ENCODE measurements at regions of chr15 and their contacts with region 1.

Region 1: DNA sequence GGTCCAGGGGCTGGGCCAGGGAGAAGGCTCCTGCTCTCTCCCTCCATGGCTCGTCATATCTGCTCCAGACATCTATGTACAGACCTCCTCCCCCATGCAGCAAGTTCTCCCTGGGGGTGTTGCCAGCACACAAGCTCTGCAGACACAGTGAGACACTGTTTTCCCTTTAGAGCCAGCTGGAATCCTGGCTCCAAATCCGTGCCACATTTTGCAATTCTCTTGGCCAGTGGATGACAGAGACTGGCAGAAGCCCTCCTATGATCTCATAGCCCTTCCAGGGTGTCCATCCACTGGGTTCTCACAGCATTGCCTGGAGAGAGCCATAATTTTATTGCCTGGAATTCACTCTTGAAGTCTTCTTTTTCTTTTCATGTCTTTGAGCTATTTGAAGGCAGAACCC is 203.9 kb downstream of the TLE3 start:
- DNase-seq: peak in 41 of 42 donors; percentile 9 to 89 (median 72)

Region 2: DNA sequence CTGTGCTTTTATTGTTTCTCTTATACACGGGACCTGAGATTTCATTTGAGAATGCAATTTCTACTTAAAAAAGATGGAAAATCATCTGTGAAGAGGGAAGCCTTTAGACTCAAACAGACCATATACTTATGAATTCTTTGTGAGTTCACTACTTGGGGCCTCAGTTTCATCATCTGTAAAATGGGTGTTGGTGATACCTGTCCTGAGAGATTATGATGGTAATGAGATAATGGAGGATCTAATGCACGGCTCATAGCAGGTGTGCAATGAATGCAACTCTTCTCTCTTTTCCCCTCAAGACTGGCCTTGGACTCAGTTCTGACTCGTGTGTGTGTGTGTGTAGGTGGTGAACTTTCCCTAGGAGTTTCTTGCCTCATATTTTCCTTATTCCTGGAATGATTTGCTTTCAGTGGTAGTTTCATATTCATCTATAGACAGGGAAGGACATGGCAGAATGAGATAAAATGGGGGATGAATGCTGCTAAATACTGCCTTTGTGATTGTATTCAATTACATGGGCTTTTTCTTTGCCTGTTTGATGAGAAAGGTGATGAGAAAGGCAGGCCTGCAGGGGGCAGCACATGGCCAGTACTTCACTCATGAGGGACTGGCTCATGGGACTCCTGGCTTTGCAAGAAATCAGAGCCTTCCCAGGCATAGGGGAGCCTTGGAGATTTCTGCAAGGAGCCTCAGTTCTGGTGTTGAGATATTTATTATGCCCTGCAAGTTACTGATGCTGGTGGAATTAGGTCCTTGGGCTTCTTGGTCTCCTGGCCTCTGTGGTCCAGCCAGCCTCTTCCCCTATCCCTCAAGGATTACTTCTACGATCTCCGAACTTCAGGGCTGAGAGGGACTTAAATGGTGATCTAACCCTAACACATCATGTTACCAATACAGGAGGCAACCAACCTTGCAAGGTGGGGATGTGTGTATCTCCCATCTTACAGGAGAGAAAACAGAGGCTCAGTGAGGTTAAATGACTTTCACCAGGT is 370.6 kb before region 1 on chr15:
- intact Hi-C with region 1: no loop called
- DNase-seq: peak; percentile 69 to 91 (median 86)

Region 3: GRCh38 chr15:70055601-70056385 is 161.9 kb after region 1 on chr15:
- intact Hi-C with region 1: loop called (anchors 10 kb)
- DNase-seq: peak in 4 of 42 donors; percentile 6 to 25 (median 8)

Region 4: GRCh38 chr15:70097337-70098169 is 203.7 kb after region 1 on chr15 and contains the start of gene TLE3:
- intact Hi-C with region 1: loop called (anchors 10 kb)
- DNase-seq: peak; percentile 96 to 100 (median 99)